ENCODE measurements at regions of chr14 and their contacts with region 1.

Region 1: DNA sequence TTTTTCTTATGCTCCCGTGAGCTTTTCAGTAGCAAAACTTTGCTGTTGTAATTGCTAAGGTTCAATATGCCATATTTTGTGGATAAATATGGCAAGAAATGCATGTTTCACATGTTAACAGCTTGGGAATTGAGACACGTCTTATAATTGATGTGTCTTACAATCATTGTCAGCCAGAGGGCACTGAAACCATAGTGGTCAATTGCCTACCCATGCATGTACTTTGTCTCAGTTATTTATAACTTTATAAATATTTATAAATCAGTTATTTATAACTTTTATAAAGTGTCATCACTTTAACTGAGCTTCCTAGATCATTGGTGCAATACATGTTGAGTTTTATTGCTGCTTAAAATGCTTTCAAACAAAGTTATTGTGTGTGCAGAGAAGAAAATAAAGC is 82.0 kb downstream of the CATSPERB start:
- DNase-seq: peak; percentile 42
- ATAC-seq: no peak
- H3K4me3 ChIP-seq: no peak overlapping the region
- H3K4me3 Mint-ChIP-seq: no peak overlapping the region
- H3K27ac ChIP-seq: no peak overlapping the region
- H3K27ac Mint-ChIP-seq: no peak overlapping the region
- H3K4me1 ChIP-seq: no peaks in the 10 kb centered on the region
- H3K4me1 Mint-ChIP-seq: no peaks in the 10 kb centered on the region
- H3K27me3 ChIP-seq: peaks cover 0 to 5% (median 0%) of the 10 kb centered on the region in 4 experiments
- H3K27me3 Mint-ChIP-seq: peaks cover 29% of the 10 kb centered on the region
- CTCF ChIP-seq: peak; percentile 74

Region 2: GRCh38 chr14:91911474-91912032 is 261.6 kb after region 1 on chr14:
- CTCF ChIA-PET with region 1: interaction called, 12 read pairs
- POLR2A ChIA-PET with region 1: no interaction called
- intact Hi-C with region 1: no loop called
- DNase-seq: peak; percentile 47
- ATAC-seq: peak; percentile 84
- H3K4me3 ChIP-seq: peak overlapping the region in 3 of 5 experiments; percentile 20 to 48 (median 25)
- H3K4me3 Mint-ChIP-seq: peak overlapping the region; percentile 66
- H3K27ac ChIP-seq: peak overlapping the region in 1 of 2 donors; percentile 76
- H3K27ac Mint-ChIP-seq: peak overlapping the region; percentile 82
- H3K4me1 ChIP-seq: peaks cover 12 to 14% of the 10 kb centered on the region in 2 donors
- H3K4me1 Mint-ChIP-seq: peaks cover 16% of the 10 kb centered on the region
- H3K27me3 ChIP-seq: peaks cover 0 to 6% (median 0%) of the 10 kb centered on the region in 4 experiments
- H3K27me3 Mint-ChIP-seq: peaks cover 20% of the 10 kb centered on the region
- CTCF ChIP-seq: no peak